ENCODE measurements at regions of chr11 and their contacts with region 1.

Region 1: GRCh38 chr11:36478700-36479329 is 31.3 kb downstream of the TRAF6 start:
- DNase-seq: peak; percentile 71 to 83 (median 79)
- H3K4me3 ChIP-seq: no peak overlapping the region
- H3K27ac ChIP-seq: no peak overlapping the region
- H3K4me1 ChIP-seq: peaks cover 0 to 3% (median 0%) of the 10 kb centered on the region in 4 experiments
- H3K27me3 ChIP-seq: no peaks in the 10 kb centered on the region

Region 2: DNA sequence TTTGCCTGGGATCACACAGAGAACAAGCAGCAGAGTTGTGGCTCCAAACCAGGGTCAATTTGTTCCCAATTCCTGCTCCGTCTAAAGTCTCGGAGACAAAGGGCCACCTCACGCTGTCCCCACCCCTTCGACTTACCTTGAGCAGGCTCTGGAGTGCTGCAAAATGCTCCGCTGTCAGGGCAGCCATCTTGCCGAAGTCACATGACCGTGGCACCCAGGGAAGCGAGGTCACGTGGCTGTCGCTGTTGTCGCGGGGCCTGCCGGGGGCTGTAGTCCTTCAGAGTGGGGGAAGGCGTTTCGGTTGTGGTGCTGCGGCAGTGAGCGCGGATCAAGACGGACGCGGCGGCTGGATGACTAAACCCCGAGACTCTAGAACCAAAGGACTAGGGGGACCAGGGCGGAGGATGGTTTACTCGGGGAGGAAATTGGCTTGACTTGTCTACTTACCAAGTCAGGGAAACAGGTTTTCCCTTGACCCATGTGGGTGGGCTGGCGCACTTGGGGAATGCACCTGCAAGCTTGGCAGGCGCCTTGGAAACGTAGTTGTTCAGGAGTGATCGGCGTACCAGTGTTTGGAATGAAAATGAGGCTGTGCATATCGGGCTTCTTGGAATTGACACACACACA is 189.5 kb before region 1 on chr11 and contains the start of gene COMMD9:
- CTCF ChIA-PET with region 1: interaction called, 191 read pairs
- POLR2A ChIA-PET with region 1: no interaction called
- DNase-seq: peak; percentile 93 to 96 (median 95)
- H3K4me3 ChIP-seq: peak within 1 kb of the TSS; percentile 87 to 100 (median 97)
- H3K27ac ChIP-seq: peak within 1 kb of the TSS; percentile 51 to 82
- H3K4me1 ChIP-seq: peaks cover 6 to 18% (median 13%) of the 10 kb centered on the region in 4 experiments
- H3K27me3 ChIP-seq: no peaks in the 10 kb centered on the region

Region 3: GRCh38 chr11:36339888-36340287 is 138.9 kb before region 1 on chr11:
- CTCF ChIA-PET with region 1: interaction called, 16 read pairs
- POLR2A ChIA-PET with region 1: no interaction called
- DNase-seq: no peak
- H3K4me3 ChIP-seq: no peak overlapping the region
- H3K27ac ChIP-seq: no peak overlapping the region
- H3K4me1 ChIP-seq: peaks cover 0 to 14% (median 8%) of the 10 kb centered on the region in 4 experiments
- H3K27me3 ChIP-seq: no peaks in the 10 kb centered on the region

Region 4: DNA sequence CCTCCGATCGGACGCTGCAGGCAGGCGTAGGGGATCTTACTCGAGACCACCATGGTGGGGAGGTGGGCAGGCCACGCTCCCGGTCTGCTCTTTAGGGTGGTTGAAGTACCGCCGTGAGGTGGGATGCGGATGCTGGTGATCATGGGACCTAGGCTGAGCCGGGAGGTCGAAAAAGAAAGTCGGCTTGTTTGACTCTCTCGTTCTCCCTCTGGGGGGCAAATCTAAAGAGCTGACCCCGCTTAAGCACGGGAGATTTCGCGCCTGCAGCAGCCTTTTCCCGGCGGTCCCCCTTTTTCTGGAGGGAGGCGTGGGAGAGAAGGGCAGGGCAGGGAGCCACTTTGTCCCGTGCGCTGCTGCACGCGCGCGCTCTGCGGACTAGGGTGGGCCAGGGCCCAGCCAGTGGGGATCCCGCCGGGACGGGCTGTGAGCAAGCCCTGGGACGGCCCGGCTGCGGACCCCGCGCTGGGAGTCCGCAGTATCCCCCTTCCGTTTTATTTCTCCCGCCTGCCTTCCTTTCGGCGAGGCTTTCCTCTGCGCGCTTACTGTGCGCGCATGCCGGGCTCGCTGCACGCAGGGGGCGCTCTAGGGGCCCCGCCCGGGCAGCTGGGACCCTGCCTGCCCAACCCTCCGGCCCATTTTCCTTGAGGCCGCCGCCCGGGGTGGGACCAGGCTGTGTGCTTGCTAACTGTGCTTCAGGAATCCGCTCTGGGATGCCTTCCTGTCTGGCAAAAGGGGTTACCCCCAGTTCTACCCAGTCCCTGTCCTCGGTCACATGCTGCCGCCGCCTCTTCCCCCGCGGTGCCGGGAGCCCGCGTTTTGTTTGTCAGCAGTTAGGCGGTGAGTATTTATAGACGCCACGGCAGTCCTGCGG is 101.7 kb before region 1 on chr11:
- CTCF ChIA-PET with region 1: interaction called, 75 read pairs
- POLR2A ChIA-PET with region 1: no interaction called
- DNase-seq: peak; percentile 61 to 89 (median 82)
- H3K4me3 ChIP-seq: peak overlapping the region; percentile 82 to 98 (median 93)
- H3K27ac ChIP-seq: peak overlapping the region; percentile 15 to 49
- H3K4me1 ChIP-seq: peaks cover 18 to 78% (median 43%) of the 10 kb centered on the region in 4 experiments
- H3K27me3 ChIP-seq: no peaks in the 10 kb centered on the region

Region 5: DNA sequence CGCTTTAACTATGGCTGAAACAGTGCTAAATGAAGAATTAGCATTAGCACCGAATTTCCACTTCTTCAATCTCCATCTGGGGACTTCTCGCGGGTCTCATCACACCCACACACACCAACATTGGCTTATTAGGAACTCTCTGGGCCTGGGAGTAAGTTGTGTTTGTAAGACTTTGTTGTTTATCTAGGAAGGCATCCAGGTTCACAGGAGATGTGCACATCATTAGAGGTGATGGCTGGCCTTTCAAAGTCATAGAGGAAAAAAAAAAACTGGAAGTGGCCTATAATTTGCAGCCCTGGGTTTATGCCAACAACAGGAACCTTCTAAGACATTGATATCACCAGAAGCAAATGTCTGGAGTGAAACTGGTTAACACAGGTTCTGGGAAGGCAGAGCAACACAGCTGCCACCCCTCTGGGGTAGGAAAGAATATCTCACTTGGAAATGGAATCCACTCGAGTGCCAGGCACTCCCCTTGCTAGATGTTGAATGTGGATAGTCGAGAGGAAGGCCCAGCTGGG is 53.2 kb before region 1 on chr11:
- CTCF ChIA-PET with region 1: interaction called, 17 read pairs
- POLR2A ChIA-PET with region 1: no interaction called
- DNase-seq: peak in 1 of 3 donors; percentile 20
- H3K4me3 ChIP-seq: no peak overlapping the region
- H3K27ac ChIP-seq: no peak overlapping the region
- H3K4me1 ChIP-seq: peaks cover 20 to 43% (median 31%) of the 10 kb centered on the region in 4 experiments
- H3K27me3 ChIP-seq: no peaks in the 10 kb centered on the region

Region 6: GRCh38 chr11:36577859-36578258 is 99.0 kb after region 1 on chr11:
- CTCF ChIA-PET with region 1: no interaction called
- POLR2A ChIA-PET with region 1: no interaction called
- DNase-seq: no peak
- H3K4me3 ChIP-seq: no peak overlapping the region
- H3K27ac ChIP-seq: no peak overlapping the region
- H3K4me1 ChIP-seq: no peaks in the 10 kb centered on the region
- H3K27me3 ChIP-seq: no peaks in the 10 kb centered on the region

Region 7: GRCh38 chr11:36605221-36606216 is 126.7 kb after region 1 on chr11:
- CTCF ChIA-PET with region 1: no interaction called
- POLR2A ChIA-PET with region 1: no interaction called
- DNase-seq: peak in 1 of 3 donors; percentile 45
- H3K4me3 ChIP-seq: no peak overlapping the region
- H3K27ac ChIP-seq: no peak overlapping the region
- H3K4me1 ChIP-seq: peaks cover 7 to 51% (median 22%) of the 10 kb centered on the region in 4 experiments
- H3K27me3 ChIP-seq: no peaks in the 10 kb centered on the region

Measured in common myeloid progenitor, CD34-positive (primary cell).